IMR-90 (cell line): ENCODE measurements at regions of chr6 and their contacts with region 1.

Region 1: DNA sequence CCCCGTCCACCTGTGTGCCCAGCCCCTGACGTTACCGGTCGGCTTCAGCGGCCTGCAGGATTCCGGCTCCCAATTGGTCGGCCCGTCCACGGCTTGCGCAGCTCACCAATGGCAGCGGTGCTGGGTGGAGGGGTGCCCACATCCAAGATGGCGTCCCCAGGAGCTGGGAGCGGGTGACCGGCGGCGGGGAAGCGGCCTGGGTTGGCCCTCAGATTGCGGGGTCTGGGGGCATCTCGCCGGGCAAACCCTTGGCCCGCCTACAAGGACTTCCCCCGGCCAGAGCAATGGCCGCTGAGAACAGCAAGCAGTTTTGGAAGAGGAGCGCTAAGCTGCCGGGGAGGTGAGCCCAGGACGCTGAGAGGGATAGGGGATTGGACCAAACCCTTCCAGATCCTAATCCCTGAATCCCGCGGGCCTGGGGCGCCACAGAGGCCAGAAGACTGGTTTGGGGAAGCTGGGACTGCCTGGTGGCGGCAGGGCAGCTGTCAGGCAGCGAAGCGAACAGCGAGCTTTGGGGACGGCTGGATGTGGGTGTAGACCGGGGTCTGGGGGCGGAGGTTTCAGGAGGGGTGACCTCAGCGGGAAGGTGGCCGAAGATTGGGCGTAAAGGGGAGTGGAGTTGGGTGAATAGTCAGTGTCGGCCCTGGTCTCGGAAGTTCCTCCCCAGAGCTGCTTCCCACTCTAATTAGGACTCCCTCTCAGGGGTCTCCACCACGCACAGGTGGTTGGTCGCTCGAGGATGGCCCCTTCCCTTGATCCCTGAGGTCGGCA is at the starts of genes TBC1D22B and TMEM217:
- DNase-seq: peak; percentile 93
- ATAC-seq: peak; percentile 99
- H3K4me3 ChIP-seq: peak within 1 kb of the TSS; percentile 92
- H3K27ac ChIP-seq: peak within 1 kb of the TSS; percentile 80
- H3K4me1 ChIP-seq: peaks cover 4% of the 10 kb centered on the region
- H3K27me3 ChIP-seq: no peaks in the 10 kb centered on the region
- CTCF ChIP-seq: no peak
- POLR2A ChIP-seq: peak; percentile 73; the same call in 1 of the 2 replicates
- RAD21 ChIP-seq: no peak
- total RNA-seq, gene TBC1D22B: 6.6 and 7.5 TPM in 2 replicates
- total RNA-seq, gene TMEM217: 1.4 TPM in 2 replicates

Region 2: GRCh38 chr6:36788768-36789167 is 469.1 kb before region 1 on chr6:
- CTCF ChIA-PET with region 1: no interaction called
- POLR2A ChIA-PET with region 1: no interaction called
- dilution Hi-C with region 1: no loop called
- in situ Hi-C with region 1: no loop called
- intact Hi-C with region 1: no loop called
- DNase-seq: peak; percentile 11
- ATAC-seq: no peak; the same call in 1 of the 2 replicates
- H3K4me3 ChIP-seq: no peak overlapping the region
- H3K27ac ChIP-seq: no peak overlapping the region
- H3K4me1 ChIP-seq: no peaks in the 10 kb centered on the region
- H3K27me3 ChIP-seq: peaks cover 49% of the 10 kb centered on the region
- CTCF ChIP-seq: no peak
- POLR2A ChIP-seq: no peak
- RAD21 ChIP-seq: no peak

Region 3: GRCh38 chr6:37222125-37222967 is 35.5 kb before region 1 on chr6:
- CTCF ChIA-PET with region 1: no interaction called
- POLR2A ChIA-PET with region 1: no interaction called
- dilution Hi-C with region 1: no loop called
- in situ Hi-C with region 1: no loop called
- intact Hi-C with region 1: loop called (anchors 1 kb)
- DNase-seq: peak; percentile 83
- ATAC-seq: peak; percentile 96
- H3K4me3 ChIP-seq: peak overlapping the region; percentile 65
- H3K27ac ChIP-seq: 0 out of 2 replicates have a peak overlapping the region, but pooled peaks have one; percentile 1
- H3K4me1 ChIP-seq: 0 out of 2 replicates have a peak, but pooled peaks cover 2% of the 10 kb centered on the region
- H3K27me3 ChIP-seq: no peaks in the 10 kb centered on the region
- CTCF ChIP-seq: 0 out of 2 replicates have a peak, but pooled peaks have one; percentile 1
- POLR2A ChIP-seq: no peak
- RAD21 ChIP-seq: no peak

Region 4: DNA sequence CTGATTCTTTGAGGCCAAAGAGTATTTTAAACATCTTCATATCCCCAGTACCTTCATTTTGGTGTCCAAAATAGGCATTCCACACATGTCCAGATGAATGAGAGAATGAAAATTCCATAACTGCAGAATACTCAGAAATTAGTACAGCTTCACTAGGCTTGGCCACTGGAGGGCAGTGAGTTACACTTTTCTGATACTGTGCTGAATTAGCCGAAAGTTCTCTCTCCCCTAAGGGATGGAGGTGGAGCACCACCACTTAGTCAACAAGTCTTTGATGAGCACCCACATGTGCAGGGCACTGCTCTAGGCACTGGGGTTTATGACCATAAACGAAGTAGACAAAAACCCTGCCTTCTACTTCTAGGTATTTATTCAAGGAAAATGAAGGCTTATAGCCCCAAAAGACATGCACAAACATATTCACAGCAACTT is 46.1 kb after region 1 on chr6:
- CTCF ChIA-PET with region 1: no interaction called
- POLR2A ChIA-PET with region 1: no interaction called
- dilution Hi-C with region 1: no loop called
- in situ Hi-C with region 1: no loop called
- intact Hi-C with region 1: loop called (anchors 2 kb)
- DNase-seq: peak; percentile 60
- ATAC-seq: peak; percentile 90
- H3K4me3 ChIP-seq: no peak overlapping the region
- H3K27ac ChIP-seq: no peak overlapping the region
- H3K4me1 ChIP-seq: peaks cover 7% of the 10 kb centered on the region
- H3K27me3 ChIP-seq: no peaks in the 10 kb centered on the region
- CTCF ChIP-seq: peak; percentile 64
- POLR2A ChIP-seq: no peak
- RAD21 ChIP-seq: peak; percentile 57